ENCODE measurements at regions of chr4 and their contacts with region 1.

Region 1: DNA sequence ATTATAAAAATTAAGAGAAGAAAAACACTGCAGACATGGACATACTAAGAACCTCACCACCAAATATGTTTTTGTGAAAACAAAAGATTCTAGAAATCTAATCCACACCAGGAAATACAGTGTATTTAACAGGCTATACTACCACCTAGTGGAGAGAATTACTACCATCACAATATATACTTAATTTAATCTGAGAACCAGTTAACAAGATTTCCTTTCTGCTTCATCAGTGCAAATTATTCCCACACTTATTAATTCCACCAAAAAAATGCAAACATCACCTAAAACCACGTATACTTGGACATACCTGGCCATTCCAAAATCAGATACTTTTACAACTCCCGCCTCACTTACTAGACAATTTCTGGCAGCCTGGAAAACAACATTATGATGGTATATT is 7.0 kb upstream of the TXK start:
- DNase-seq: no peak
- H3K4me3 Mint-ChIP-seq: no peak overlapping the region
- H3K27ac Mint-ChIP-seq: no peak overlapping the region
- H3K4me1 Mint-ChIP-seq: peaks cover 47% of the 10 kb centered on the region
- H3K27me3 Mint-ChIP-seq: no peaks in the 10 kb centered on the region

Region 2: GRCh38 chr4:47914220-47914925 is 226.7 kb before region 1 on chr4 and contains the start of gene NFXL1:
- CTCF ChIA-PET with region 1: no interaction called
- POLR2A ChIA-PET with region 1: interaction called, 11 read pairs
- DNase-seq: peak; percentile 97
- H3K4me3 Mint-ChIP-seq: peak within 1 kb of the TSS; percentile 82
- H3K27ac Mint-ChIP-seq: peak within 1 kb of the TSS; percentile 88
- H3K4me1 Mint-ChIP-seq: peaks cover 33% of the 10 kb centered on the region
- H3K27me3 Mint-ChIP-seq: peaks cover 3% of the 10 kb centered on the region
- total RNA-seq, gene NFXL1: 9.5 to 9.8 TPM

Region 3: GRCh38 chr4:48109413-48110263 is 31.4 kb before region 1 on chr4:
- CTCF ChIA-PET with region 1: interaction called, 18 read pairs
- POLR2A ChIA-PET with region 1: no interaction called
- DNase-seq: no peak
- H3K4me3 Mint-ChIP-seq: no peak overlapping the region
- H3K27ac Mint-ChIP-seq: no peak overlapping the region
- H3K4me1 Mint-ChIP-seq: peaks cover 31% of the 10 kb centered on the region
- H3K27me3 Mint-ChIP-seq: no peaks in the 10 kb centered on the region

Region 4: GRCh38 chr4:48127682-48128394 is 13.2 kb before region 1 on chr4:
- CTCF ChIA-PET with region 1: interaction called, 114 read pairs
- POLR2A ChIA-PET with region 1: interaction called, 77 read pairs
- DNase-seq: peak; percentile 83
- H3K4me3 Mint-ChIP-seq: peak overlapping the region; percentile 50
- H3K27ac Mint-ChIP-seq: peak overlapping the region; percentile 78
- H3K4me1 Mint-ChIP-seq: peaks cover 76% of the 10 kb centered on the region
- H3K27me3 Mint-ChIP-seq: no peaks in the 10 kb centered on the region

Region 5: DNA sequence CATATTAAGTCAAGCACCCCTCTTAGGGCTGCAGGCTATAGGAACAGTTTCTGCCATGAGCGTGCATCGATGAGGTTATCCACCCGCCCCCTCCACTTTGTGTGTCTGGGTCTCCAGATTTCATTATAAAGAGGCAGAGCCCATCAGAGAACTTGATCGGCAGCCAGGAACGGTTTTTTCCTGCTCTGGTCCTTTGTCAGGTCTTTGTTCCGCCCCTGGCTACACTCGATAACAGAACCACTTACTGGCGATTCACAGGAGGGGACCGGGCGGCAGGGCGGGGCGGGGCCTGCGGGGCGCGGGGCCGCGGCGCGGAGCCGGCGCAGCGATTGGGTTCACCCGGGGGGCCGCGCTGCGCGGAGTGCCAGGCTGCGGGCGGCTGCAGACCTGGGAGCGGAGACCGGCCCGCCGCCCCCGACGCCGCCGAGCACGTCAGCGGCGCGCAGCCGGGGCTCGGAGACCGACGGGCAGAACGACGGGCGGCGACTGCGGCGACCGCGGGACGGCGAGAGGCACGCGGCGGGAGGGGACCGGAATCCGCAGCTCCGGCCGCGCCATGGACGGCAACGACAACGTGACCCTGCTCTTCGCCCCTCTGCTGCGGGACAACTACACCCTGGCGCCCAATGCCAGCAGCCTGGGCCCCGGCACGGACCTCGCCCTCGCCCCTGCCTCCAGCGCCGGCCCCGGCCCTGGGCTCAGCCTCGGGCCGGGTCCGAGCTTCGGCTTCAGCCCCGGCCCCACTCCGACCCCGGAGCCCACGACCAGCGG is 342.1 kb after region 1 on chr4 and contains the start of gene SLC10A4:
- CTCF ChIA-PET with region 1: no interaction called
- POLR2A ChIA-PET with region 1: no interaction called
- DNase-seq: no peak
- H3K4me3 Mint-ChIP-seq: peak within 1 kb of the TSS; percentile 23
- H3K27ac Mint-ChIP-seq: no peak within 1 kb of the TSS
- H3K4me1 Mint-ChIP-seq: peaks cover 16% of the 10 kb centered on the region
- H3K27me3 Mint-ChIP-seq: peaks cover 61% of the 10 kb centered on the region
- total RNA-seq, gene SLC10A4: not detected